Posterior cingulate gyrus (tissue), 11 donors: ENCODE measurements at regions of chr18 and their contacts with region 1.

Region 1: GRCh38 chr18:24695168-24695567 is 234.7 kb downstream of the HRH4 start:
- DNase-seq: no peak

Region 2: GRCh38 chr18:24651434-24651833 is 43.7 kb before region 1 on chr18:
- intact Hi-C with region 1: loop called (anchors 2 kb)
- DNase-seq: peak in 3 of 10 donors; percentile 27 to 80 (median 42)